ENCODE measurements at regions of chr3 and their contacts with region 1.

Region 1: DNA sequence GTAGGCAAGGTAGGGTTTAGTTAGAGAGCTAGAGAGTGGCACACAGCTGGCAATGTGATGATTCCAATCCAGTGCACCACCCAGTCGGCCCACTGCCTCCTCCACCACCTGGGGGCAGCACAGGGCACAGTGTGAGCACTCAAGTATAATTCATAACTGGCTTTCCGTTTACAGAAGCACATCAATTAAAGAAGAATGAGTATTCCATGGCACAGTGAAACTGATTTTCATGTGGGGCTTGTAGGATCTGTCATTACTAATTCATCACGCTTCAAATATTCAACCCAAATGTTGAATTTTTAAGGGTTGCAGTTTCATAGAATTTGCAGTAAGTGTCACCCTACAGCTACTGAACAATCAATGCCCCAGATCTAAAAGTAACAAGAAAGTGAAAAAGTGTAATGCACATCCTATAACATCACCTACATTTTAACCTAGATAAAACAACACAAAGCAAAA is 149.9 kb downstream of the IGSF11 start:
- DNase-seq: peak; percentile 39 to 78 (median 67)
- ATAC-seq: peak in 3 of 4 donors; percentile 82 to 90 (median 85)
- H3K4me3 ChIP-seq: no peak overlapping the region
- H3K27ac ChIP-seq: no peak overlapping the region
- H3K4me1 ChIP-seq: peaks cover 0 to 4% (median 0%) of the 10 kb centered on the region in 12 donors
- H3K27me3 ChIP-seq: peaks cover 0 to 20% (median 0%) of the 10 kb centered on the region in 9 donors
- CTCF ChIP-seq: peak; percentile 67 to 90 (median 84)
- POLR2A ChIP-seq: no peak

Region 2: GRCh38 chr3:119034256-119035013 is 149.7 kb after region 1 on chr3 and contains the start of gene IGSF11:
- intact Hi-C with region 1: loop called in 9 of 10 experiments (anchors 1 to 5 kb)
- DNase-seq: peak; percentile 47 to 80 (median 59)
- ATAC-seq: peak; percentile 86 to 99 (median 94)
- H3K4me3 ChIP-seq: peak within 1 kb of the TSS; percentile 42 to 79 (median 59)
- H3K27ac ChIP-seq: peak within 1 kb of the TSS in 4 of 12 donors; percentile 33 to 62 (median 48)
- H3K4me1 ChIP-seq: peaks cover 0 to 13% (median 0%) of the 10 kb centered on the region in 12 donors
- H3K27me3 ChIP-seq: peaks cover 0 to 57% (median 4%) of the 10 kb centered on the region in 9 donors
- CTCF ChIP-seq: peak in 11 of 12 donors; percentile 26 to 73 (median 63)
- POLR2A ChIP-seq: no peak
- total RNA-seq, gene IGSF11: 0.32 to 5.0 (median 1.5) TPM

Region 3: DNA sequence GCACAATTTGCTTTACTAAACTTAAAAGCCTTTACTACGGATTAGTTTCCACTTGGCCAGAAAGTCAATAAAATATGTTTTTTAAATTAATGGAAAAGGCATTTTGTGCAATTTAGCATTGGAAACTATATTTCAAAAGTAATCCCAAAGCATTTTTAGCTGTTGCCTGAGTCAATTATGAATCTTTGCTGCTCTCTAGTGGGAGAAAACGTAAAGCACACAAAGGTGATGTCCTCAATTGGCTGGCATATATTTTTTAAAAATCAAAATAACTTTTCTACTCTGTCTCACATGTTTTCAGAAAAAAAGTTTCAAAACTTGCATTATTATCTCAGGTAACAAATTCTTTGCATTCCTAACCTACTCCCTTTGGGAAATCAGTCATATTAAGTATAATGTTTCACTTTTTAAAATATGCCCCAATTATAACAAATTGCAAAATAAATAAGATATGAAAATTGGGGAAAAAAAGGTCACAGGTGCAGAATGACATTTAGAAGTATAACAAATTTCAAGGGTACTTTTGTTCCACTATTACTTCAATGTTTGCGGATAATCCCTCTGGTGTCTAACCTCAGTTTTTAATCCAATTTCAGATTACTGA is 213.9 kb after region 1 on chr3:
- intact Hi-C with region 1: loop called (anchors 1 to 2 kb)
- DNase-seq: no peak
- ATAC-seq: no peak
- H3K4me3 ChIP-seq: no peak overlapping the region
- H3K27ac ChIP-seq: no peak overlapping the region
- H3K4me1 ChIP-seq: no peaks in the 10 kb centered on the region
- H3K27me3 ChIP-seq: no peaks in the 10 kb centered on the region
- CTCF ChIP-seq: peak; percentile 46 to 81 (median 65)
- POLR2A ChIP-seq: no peak

Region 4: GRCh38 chr3:119219069-119219468 is 334.3 kb after region 1 on chr3:
- intact Hi-C with region 1: loop called in 1 of 10 experiments (anchors 10 kb)
- DNase-seq: no peak
- ATAC-seq: no peak
- H3K4me3 ChIP-seq: no peak overlapping the region
- H3K27ac ChIP-seq: no peak overlapping the region
- H3K4me1 ChIP-seq: no peaks in the 10 kb centered on the region
- H3K27me3 ChIP-seq: no peaks in the 10 kb centered on the region
- CTCF ChIP-seq: no peak
- POLR2A ChIP-seq: no peak

Region 5: DNA sequence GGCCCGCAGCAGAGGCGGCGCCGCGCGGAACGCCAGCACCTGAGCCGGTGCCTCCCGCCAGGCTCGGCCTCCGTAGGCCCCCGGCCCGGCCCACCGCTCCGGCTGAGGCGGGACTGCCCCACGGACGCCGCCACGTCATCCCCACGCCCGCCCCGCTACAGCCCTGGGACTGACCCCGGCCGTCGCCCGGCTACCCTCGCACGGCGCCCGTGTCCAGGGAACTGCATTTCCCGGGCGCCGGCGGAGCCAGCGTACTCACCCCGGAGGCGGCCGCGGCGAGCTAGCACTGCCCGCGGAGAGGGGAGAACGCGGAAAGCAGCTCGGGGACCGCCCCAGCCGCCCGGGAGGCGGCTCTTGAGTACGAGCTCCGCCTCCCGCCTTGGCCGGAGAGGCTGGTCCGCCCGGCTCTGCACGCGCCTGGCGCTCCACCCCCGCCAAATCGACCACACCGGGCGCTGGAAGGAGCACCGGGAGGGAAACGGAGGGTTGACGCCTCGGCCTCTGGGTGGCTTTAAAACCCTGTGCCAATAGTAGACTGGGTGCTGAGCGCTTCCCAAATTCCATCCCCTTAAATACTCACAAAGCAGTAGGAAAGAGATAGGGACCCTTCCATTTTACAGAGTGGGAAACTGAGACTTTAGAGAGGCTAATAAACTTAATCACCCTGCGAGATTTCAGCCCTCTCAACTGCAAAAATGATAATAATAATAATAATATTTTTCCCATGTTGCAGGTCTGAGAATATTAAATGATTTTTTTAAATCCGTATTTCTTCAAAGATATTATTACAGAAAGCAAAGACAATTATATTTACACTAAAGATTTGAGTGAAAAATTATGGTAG is 356.0 kb after region 1 on chr3 and contains the start of gene B4GALT4:
- intact Hi-C with region 1: loop called in 4 of 10 experiments (anchors 1 to 10 kb)
- DNase-seq: peak; percentile 89 to 93 (median 92)
- ATAC-seq: peak; percentile 88 to 97 (median 96)
- H3K4me3 ChIP-seq: peak within 1 kb of the TSS; percentile 45 to 92 (median 73)
- H3K27ac ChIP-seq: peak within 1 kb of the TSS; percentile 75 to 97 (median 91)
- H3K4me1 ChIP-seq: peaks cover 0 to 47% (median 23%) of the 10 kb centered on the region in 12 donors
- H3K27me3 ChIP-seq: no peaks in the 10 kb centered on the region
- CTCF ChIP-seq: peak in 1 of 12 donors; percentile 6
- POLR2A ChIP-seq: peak; percentile 53 to 85
- total RNA-seq, gene B4GALT4: 8.1 to 15.9 (median 10.6) TPM

Region 6: DNA sequence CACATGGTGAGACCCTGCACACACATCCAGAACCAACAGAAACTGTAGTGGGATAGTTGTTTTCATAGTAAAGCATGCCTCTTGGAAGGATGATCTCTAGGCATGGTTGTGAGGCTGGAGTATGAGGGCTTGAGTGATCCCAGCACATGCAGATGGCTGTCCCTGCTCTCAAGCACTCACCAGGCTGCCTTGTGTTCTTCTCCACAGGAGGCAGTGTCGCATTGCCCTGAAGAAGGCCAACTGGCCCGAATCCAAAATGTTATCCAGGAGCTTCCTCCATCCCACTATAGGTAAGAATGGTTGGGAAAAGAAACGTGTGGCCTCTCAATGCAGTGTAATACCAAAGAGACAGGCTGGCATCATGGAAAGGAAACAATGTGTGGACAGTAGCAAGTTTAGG is 495.9 kb after region 1 on chr3:
- intact Hi-C with region 1: loop called in 1 of 10 experiments (anchors 10 kb)
- DNase-seq: no peak
- ATAC-seq: peak in 3 of 4 donors; percentile 18 to 44 (median 25)
- H3K4me3 ChIP-seq: no peak overlapping the region
- H3K27ac ChIP-seq: no peak overlapping the region
- H3K4me1 ChIP-seq: peaks cover 0 to 8% (median 0%) of the 10 kb centered on the region in 12 donors
- H3K27me3 ChIP-seq: no peaks in the 10 kb centered on the region
- CTCF ChIP-seq: peak in 3 of 12 donors; percentile 14 to 18 (median 15)
- POLR2A ChIP-seq: no peak

Measured in heart left ventricle (tissue), 16 donors.